RWPE1 (cell line): ENCODE measurements at regions of chr12 and their contacts with region 1.

Region 1: DNA sequence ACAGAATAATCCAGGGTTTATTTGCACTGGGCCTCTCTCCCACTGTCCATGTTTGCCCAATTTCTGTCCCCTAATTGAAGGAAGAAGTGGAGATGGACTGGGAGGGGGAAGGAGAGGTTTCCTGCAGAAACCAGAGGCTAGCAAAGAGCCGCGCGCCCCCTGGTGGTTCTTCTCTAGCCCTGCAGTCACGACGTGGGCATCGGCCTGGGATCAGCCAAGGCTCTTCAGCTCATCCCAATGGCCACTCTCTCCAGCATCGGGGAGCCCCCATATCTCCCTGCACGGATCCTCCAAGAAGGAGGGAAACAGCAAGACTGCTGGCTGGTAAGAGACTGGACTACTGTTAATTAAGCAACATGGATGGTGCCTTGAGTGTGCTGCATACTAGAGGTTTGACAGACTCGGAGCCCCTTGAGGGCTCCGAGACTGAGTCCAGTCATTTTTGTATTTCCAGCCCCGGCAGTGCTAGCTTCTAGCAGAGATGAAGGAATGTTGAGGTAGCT is 18.7 kb downstream of the ZBTB39 start:
- DNase-seq: peak; percentile 71
- H3K27ac ChIP-seq: no peak overlapping the region; the same call in 1 of the 2 replicates
- CTCF ChIP-seq: peak; percentile 94

Region 2: GRCh38 chr12:56839915-56840325 is 147.7 kb before region 1 on chr12:
- CTCF ChIA-PET with region 1: interaction called, 20 read pairs
- POLR2A ChIA-PET with region 1: no interaction called
- DNase-seq: peak; percentile 52
- H3K27ac ChIP-seq: no peak overlapping the region
- CTCF ChIP-seq: peak; percentile 57